ENCODE measurements at regions of chr2 and their contacts with region 1.

Region 1: GRCh38 chr2:163345908-163346573 is 389.8 kb downstream of the FIGN start:
- DNase-seq: peak in 1 of 2 experiments; percentile 71
- H3K4me3 ChIP-seq: no peak overlapping the region
- H3K4me3 Mint-ChIP-seq: no peak overlapping the region
- H3K27ac Mint-ChIP-seq: no peak overlapping the region
- H3K4me1 ChIP-seq: peaks cover 17% of the 10 kb centered on the region
- H3K4me1 Mint-ChIP-seq: peaks cover 10% of the 10 kb centered on the region
- H3K27me3 ChIP-seq: no peaks in the 10 kb centered on the region
- H3K27me3 Mint-ChIP-seq: no peaks in the 10 kb centered on the region
- CTCF ChIP-seq: peak; percentile 50 to 86

Region 2: DNA sequence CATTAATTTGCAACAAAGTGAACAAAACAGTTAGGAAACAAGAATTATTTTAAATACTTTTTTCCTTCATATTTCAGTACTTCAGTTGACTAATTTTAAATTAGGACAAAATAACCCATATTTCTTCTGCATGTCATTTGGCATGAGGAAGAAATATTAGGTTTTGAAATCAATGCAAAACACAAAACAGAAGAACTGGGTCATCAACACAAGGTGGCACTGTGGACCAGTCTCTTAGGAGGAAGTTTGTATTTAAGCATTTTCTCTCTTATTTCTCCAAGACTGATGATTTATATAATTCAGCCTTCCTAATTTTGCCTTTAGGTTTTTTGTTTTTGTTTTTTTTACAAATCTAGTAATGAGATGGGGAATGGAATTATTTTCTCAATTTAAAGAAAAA is 154.7 kb before region 1 on chr2:
- CTCF ChIA-PET with region 1: no interaction called
- POLR2A ChIA-PET with region 1: no interaction called
- intact Hi-C with region 1: loop called (anchors 1 kb)
- DNase-seq: peak in 1 of 2 experiments; percentile 20
- H3K4me3 ChIP-seq: no peak overlapping the region
- H3K4me3 Mint-ChIP-seq: no peak overlapping the region
- H3K27ac Mint-ChIP-seq: no peak overlapping the region
- H3K4me1 ChIP-seq: no peaks in the 10 kb centered on the region
- H3K4me1 Mint-ChIP-seq: no peaks in the 10 kb centered on the region
- H3K27me3 ChIP-seq: no peaks in the 10 kb centered on the region
- H3K27me3 Mint-ChIP-seq: peaks cover 2% of the 10 kb centered on the region
- CTCF ChIP-seq: peak; percentile 51 to 61

Region 3: DNA sequence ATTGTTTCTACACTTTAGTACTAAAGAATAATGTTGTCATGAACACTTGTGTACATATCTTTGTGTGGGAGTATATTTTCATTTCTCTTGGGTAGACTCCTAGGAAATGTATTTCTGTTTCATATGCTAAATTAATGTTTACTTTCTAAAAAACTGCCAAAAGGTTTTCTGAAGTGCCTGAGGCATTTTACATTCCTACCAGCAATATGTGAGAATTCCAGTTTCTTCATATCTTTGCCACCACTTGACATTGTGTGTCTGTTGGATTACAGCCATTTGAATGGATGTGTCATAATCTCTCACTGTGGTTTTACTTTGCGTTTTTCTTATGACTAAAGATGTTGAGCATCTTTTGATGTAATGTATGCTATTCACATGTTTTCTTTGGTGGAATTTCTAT is 79.3 kb before region 1 on chr2:
- CTCF ChIA-PET with region 1: no interaction called
- POLR2A ChIA-PET with region 1: no interaction called
- intact Hi-C with region 1: no loop called
- DNase-seq: no peak
- H3K4me3 ChIP-seq: no peak overlapping the region
- H3K4me3 Mint-ChIP-seq: no peak overlapping the region
- H3K27ac Mint-ChIP-seq: no peak overlapping the region
- H3K4me1 ChIP-seq: no peaks in the 10 kb centered on the region
- H3K4me1 Mint-ChIP-seq: no peaks in the 10 kb centered on the region
- H3K27me3 ChIP-seq: no peaks in the 10 kb centered on the region
- H3K27me3 Mint-ChIP-seq: no peaks in the 10 kb centered on the region
- CTCF ChIP-seq: no peak

Region 4: GRCh38 chr2:163420604-163421003 is 74.6 kb after region 1 on chr2:
- CTCF ChIA-PET with region 1: no interaction called
- POLR2A ChIA-PET with region 1: no interaction called
- intact Hi-C with region 1: loop called (anchors 5 kb)
- DNase-seq: no peak
- H3K4me3 ChIP-seq: no peak overlapping the region
- H3K4me3 Mint-ChIP-seq: no peak overlapping the region
- H3K27ac Mint-ChIP-seq: no peak overlapping the region
- H3K4me1 ChIP-seq: no peaks in the 10 kb centered on the region
- H3K4me1 Mint-ChIP-seq: no peaks in the 10 kb centered on the region
- H3K27me3 ChIP-seq: no peaks in the 10 kb centered on the region
- H3K27me3 Mint-ChIP-seq: peaks cover 3% of the 10 kb centered on the region
- CTCF ChIP-seq: no peak

Region 5: DNA sequence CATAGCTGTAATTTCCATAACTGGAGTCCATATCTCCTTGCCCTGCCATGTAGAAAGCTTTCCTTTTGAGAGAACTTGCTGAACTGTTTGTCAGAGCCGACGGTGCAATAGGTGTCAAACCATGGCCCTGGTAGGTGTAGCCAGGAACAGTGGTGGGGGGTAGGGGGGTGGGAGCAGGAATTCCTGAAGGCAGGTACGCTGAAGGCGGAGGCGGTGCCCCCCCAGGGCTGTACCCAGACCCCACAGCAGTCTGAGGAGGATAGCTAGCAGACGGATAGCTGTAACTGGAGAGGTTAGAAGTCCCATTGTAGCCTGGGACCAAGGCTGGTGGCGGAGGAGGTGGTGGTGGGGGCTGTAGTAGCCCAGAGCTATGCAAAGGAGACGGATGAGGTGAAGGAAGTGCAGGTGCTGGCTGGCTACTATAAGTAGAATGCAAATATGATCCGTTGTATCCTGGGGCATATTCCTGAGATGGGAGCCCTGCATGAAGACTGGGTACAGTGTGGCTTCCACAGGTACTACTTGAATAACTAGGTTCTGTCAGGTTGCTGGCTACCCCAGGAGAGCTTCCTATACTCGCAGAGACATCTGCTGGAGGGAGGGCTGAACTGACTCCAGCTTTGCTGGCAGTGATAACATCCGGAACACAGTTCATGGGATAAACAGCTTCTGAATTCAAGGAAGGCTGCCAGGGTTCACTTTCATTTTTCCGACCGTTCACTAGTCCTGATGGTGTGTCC is 264.9 kb after region 1 on chr2:
- CTCF ChIA-PET with region 1: interaction called, 7 read pairs
- POLR2A ChIA-PET with region 1: no interaction called
- intact Hi-C with region 1: loop called (anchors 1 kb)
- DNase-seq: peak; percentile 60 to 62
- H3K4me3 ChIP-seq: no peak overlapping the region
- H3K4me3 Mint-ChIP-seq: no peak overlapping the region
- H3K27ac Mint-ChIP-seq: no peak overlapping the region
- H3K4me1 ChIP-seq: no peaks in the 10 kb centered on the region
- H3K4me1 Mint-ChIP-seq: no peaks in the 10 kb centered on the region
- H3K27me3 ChIP-seq: no peaks in the 10 kb centered on the region
- H3K27me3 Mint-ChIP-seq: no peaks in the 10 kb centered on the region
- CTCF ChIP-seq: peak; percentile 49 to 71

Region 6: DNA sequence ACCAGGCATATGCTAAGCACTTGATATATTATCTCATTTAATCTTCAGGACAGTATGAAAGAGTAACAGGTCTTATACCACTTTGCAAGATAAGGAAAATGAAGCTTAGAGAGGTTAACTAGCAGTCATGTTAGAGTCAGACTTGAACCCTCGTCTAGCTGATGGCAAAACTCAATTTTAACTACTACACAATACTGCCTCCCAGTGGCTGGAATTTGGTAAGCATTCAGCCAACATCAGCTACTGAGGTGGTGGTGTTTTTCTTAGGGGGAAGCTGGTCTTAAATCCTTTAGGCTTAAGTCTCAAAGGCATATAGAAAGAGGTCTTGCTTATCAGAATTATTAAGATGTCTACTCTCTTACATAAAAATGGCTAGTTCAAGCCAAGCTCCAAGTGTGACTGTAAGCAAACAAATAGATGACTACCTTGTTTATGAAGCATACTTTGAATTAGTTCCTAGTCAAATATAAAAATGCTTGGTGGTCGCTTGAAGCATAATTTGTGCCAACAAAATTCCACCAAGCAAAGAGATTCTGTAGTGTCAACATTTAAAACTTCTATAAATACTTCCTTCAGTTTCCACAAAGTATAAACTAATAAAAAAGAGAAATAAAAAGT is 715.2 kb after region 1 on chr2:
- CTCF ChIA-PET with region 1: interaction called, 8 read pairs
- POLR2A ChIA-PET with region 1: no interaction called
- intact Hi-C with region 1: loop called (anchors 2 kb)
- DNase-seq: peak in 1 of 2 experiments; percentile 55
- H3K4me3 ChIP-seq: no peak overlapping the region
- H3K4me3 Mint-ChIP-seq: no peak overlapping the region
- H3K27ac Mint-ChIP-seq: no peak overlapping the region
- H3K4me1 ChIP-seq: no peaks in the 10 kb centered on the region
- H3K4me1 Mint-ChIP-seq: no peaks in the 10 kb centered on the region
- H3K27me3 ChIP-seq: no peaks in the 10 kb centered on the region
- H3K27me3 Mint-ChIP-seq: peaks cover 5% of the 10 kb centered on the region
- CTCF ChIP-seq: peak; percentile 64 to 66

Region 7: GRCh38 chr2:164479460-164479859 is 1133.4 kb after region 1 on chr2:
- CTCF ChIA-PET with region 1: no interaction called
- POLR2A ChIA-PET with region 1: no interaction called
- intact Hi-C with region 1: loop called (anchors 5 kb)
- DNase-seq: peak; percentile 33 to 43
- H3K4me3 ChIP-seq: no peak overlapping the region
- H3K4me3 Mint-ChIP-seq: no peak overlapping the region
- H3K27ac Mint-ChIP-seq: no peak overlapping the region
- H3K4me1 ChIP-seq: peaks cover 4% of the 10 kb centered on the region; the same call in 1 of the 2 replicates
- H3K4me1 Mint-ChIP-seq: no peaks in the 10 kb centered on the region
- H3K27me3 ChIP-seq: no peaks in the 10 kb centered on the region
- H3K27me3 Mint-ChIP-seq: no peaks in the 10 kb centered on the region
- CTCF ChIP-seq: peak; percentile 47 to 49

Measured in Caco-2 (cell line).